CD8-positive, alpha-beta T cell (primary cell): ENCODE measurements at regions of chr1 and their contacts with region 1.

Region 1: DNA sequence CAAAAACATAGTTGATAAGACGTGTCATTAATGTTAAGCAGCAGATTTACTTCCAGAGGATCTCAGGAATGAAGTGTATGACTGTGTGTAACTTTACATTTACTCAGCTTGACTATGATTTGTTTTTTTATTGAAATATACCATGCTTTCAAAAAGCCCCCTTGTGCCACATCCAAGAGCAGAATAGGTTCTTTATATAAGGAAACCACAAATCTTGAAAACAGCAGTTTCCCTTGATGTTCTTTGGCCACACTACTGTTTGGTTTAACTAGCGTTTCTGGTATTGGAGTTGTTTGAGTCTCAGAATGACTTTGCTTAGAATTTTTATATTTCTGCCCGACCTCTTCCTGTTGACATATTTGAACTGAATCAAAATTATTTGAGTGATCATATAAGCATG is 25.0 kb downstream of the LRRC8C start:
- DNase-seq: peak in 3 of 9 experiments; percentile 47 to 87 (median 75)
- ATAC-seq: peak; percentile 74
- H3K4me3 ChIP-seq: no peak overlapping the region
- H3K4me3 Mint-ChIP-seq: peak overlapping the region; percentile 51
- H3K27ac ChIP-seq: peak overlapping the region; percentile 21 to 58
- H3K27ac Mint-ChIP-seq: peak overlapping the region; percentile 88
- H3K4me1 ChIP-seq: peaks cover 73% of the 10 kb centered on the region
- H3K4me1 Mint-ChIP-seq: peaks cover 92% of the 10 kb centered on the region
- H3K27me3 ChIP-seq: no peaks in the 10 kb centered on the region
- H3K27me3 Mint-ChIP-seq: no peaks in the 10 kb centered on the region
- CTCF ChIP-seq: no peak

Region 2: DNA sequence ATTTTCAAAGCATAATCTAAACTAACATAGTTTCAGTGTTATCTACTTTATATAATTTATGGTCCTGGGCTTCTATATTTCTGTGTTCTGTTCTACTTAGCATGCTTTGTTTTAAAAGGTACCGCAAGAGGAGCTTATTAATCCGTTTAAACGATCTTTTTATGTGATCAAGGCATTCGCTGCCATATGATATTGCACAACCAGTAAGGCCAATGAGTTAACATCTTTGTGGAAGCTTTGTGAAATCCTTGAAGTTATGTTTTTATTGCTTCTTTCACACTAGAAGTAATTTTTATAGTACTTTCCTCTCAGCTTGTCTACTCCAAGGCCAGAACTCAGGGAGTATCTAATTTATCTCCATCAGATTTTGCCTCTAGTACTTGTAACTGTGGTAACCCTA is 16.1 kb before region 1 on chr1:
- CTCF ChIA-PET with region 1: interaction called, 6 read pairs
- POLR2A ChIA-PET with region 1: interaction called, 9 read pairs
- intact Hi-C with region 1: loop called (anchors 2 kb)
- DNase-seq: no peak
- ATAC-seq: no peak
- H3K4me3 ChIP-seq: no peak overlapping the region
- H3K4me3 Mint-ChIP-seq: no peak overlapping the region
- H3K27ac ChIP-seq: no peak overlapping the region
- H3K27ac Mint-ChIP-seq: peak overlapping the region; percentile 58
- H3K4me1 ChIP-seq: peaks cover 58% of the 10 kb centered on the region
- H3K4me1 Mint-ChIP-seq: peaks cover 70% of the 10 kb centered on the region
- H3K27me3 ChIP-seq: no peaks in the 10 kb centered on the region
- H3K27me3 Mint-ChIP-seq: no peaks in the 10 kb centered on the region
- CTCF ChIP-seq: no peak

Region 3: GRCh38 chr1:89671775-89672488 is 14.0 kb after region 1 on chr1:
- CTCF ChIA-PET with region 1: interaction called, 4 read pairs
- POLR2A ChIA-PET with region 1: interaction called, 7 read pairs
- intact Hi-C with region 1: loop called in 1 of 2 experiments (anchors 1 kb)
- DNase-seq: no peak
- ATAC-seq: no peak
- H3K4me3 ChIP-seq: no peak overlapping the region
- H3K4me3 Mint-ChIP-seq: no peak overlapping the region
- H3K27ac ChIP-seq: no peak overlapping the region
- H3K27ac Mint-ChIP-seq: peak overlapping the region; percentile 23
- H3K4me1 ChIP-seq: peaks cover 83% of the 10 kb centered on the region
- H3K4me1 Mint-ChIP-seq: peaks cover 90% of the 10 kb centered on the region
- H3K27me3 ChIP-seq: no peaks in the 10 kb centered on the region
- H3K27me3 Mint-ChIP-seq: no peaks in the 10 kb centered on the region
- CTCF ChIP-seq: no peak

Region 4: GRCh38 chr1:89698624-89699023 is 40.7 kb after region 1 on chr1:
- CTCF ChIA-PET with region 1: no interaction called
- POLR2A ChIA-PET with region 1: interaction called, 6 read pairs
- intact Hi-C with region 1: loop called in 1 of 2 experiments (anchors 2 kb)
- DNase-seq: peak in 2 of 9 experiments; percentile 34 to 62
- ATAC-seq: peak; percentile 37
- H3K4me3 ChIP-seq: no peak overlapping the region
- H3K4me3 Mint-ChIP-seq: peak overlapping the region; percentile 73
- H3K27ac ChIP-seq: peak overlapping the region; percentile 28 to 69
- H3K27ac Mint-ChIP-seq: peak overlapping the region; percentile 93
- H3K4me1 ChIP-seq: peaks cover 68% of the 10 kb centered on the region
- H3K4me1 Mint-ChIP-seq: peaks cover 88% of the 10 kb centered on the region
- H3K27me3 ChIP-seq: no peaks in the 10 kb centered on the region
- H3K27me3 Mint-ChIP-seq: no peaks in the 10 kb centered on the region
- CTCF ChIP-seq: no peak

Region 5: GRCh38 chr1:89884718-89885596 is 227.1 kb after region 1 on chr1:
- CTCF ChIA-PET with region 1: no interaction called
- POLR2A ChIA-PET with region 1: no interaction called
- intact Hi-C with region 1: no loop called
- DNase-seq: no peak
- ATAC-seq: no peak
- H3K4me3 ChIP-seq: no peak overlapping the region
- H3K4me3 Mint-ChIP-seq: no peak overlapping the region
- H3K27ac ChIP-seq: no peak overlapping the region
- H3K27ac Mint-ChIP-seq: no peak overlapping the region
- H3K4me1 ChIP-seq: no peaks in the 10 kb centered on the region
- H3K4me1 Mint-ChIP-seq: peaks cover 43% of the 10 kb centered on the region
- H3K27me3 ChIP-seq: no peaks in the 10 kb centered on the region
- H3K27me3 Mint-ChIP-seq: no peaks in the 10 kb centered on the region
- CTCF ChIP-seq: no peak